ENCODE measurements at regions of chr17 and their contacts with region 1.

Region 1: GRCh38 chr17:75430159-75430974 is 24.9 kb upstream of the GRB2 start:
- DNase-seq: no peak
- ATAC-seq: no peak
- H3K4me3 Mint-ChIP-seq: no peak overlapping the region
- H3K27ac Mint-ChIP-seq: no peak overlapping the region
- H3K4me1 Mint-ChIP-seq: peaks cover 16% of the 10 kb centered on the region
- H3K27me3 Mint-ChIP-seq: peaks cover 5% of the 10 kb centered on the region

Region 2: GRCh38 chr17:74467221-74467951 is 963.0 kb before region 1 on chr17:
- CTCF ChIA-PET with region 1: no interaction called
- POLR2A ChIA-PET with region 1: no interaction called
- intact Hi-C with region 1: no loop called
- DNase-seq: peak; percentile 25
- ATAC-seq: no peak
- H3K4me3 Mint-ChIP-seq: no peak overlapping the region
- H3K27ac Mint-ChIP-seq: peak overlapping the region; percentile 27
- H3K4me1 Mint-ChIP-seq: peaks cover 25% of the 10 kb centered on the region
- H3K27me3 Mint-ChIP-seq: no peaks in the 10 kb centered on the region

Region 3: DNA sequence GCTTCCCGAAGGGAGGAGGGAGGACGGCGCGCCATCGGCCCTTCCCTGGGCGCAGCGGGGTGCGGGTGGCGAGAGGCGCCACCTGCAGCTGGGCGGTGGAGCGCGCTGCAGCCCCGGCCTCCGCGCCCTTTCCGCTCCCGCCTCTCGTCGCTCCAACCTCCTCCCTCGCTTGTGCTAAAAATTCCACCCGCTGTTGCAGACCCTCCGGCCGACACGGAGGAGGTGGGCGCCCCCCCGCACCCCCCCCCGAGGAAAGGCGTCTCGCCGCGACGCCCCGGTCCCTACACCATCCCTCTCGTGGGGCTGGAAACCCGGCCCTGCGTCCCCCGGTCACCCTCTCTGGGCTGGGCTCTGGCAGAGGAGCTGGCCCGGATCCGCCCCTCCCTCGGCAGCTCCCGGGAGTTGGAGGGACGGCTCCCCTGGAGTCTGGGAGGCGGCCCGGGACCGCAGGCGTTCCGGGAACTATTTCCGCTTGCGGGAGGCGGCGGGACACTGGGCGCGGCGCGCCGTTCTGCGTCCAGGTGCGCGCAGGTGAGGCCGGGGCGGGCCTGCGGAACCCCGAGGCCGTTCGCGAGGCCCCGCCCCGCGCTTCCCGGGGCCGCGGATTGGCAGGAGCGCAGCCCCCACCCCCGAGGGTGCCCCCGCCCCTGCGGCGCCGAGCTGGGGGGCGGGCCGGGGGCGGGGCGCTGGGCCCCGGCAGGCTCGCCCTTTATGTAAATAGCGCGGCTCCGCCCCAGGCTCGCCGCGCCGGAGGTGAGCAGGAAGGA is 94.8 kb after region 1 on chr17 and contains the start of gene LLGL2:
- CTCF ChIA-PET with region 1: interaction called, 5 read pairs
- POLR2A ChIA-PET with region 1: no interaction called
- intact Hi-C with region 1: loop called (anchors 1 to 2 kb)
- DNase-seq: peak; percentile 88
- ATAC-seq: peak; percentile 89
- H3K4me3 Mint-ChIP-seq: peak within 1 kb of the TSS; percentile 62
- H3K27ac Mint-ChIP-seq: no peak within 1 kb of the TSS
- H3K4me1 Mint-ChIP-seq: peaks cover 10% of the 10 kb centered on the region
- H3K27me3 Mint-ChIP-seq: no peaks in the 10 kb centered on the region
- total RNA-seq, gene LLGL2: 7.1 to 9.6 TPM